Naive thymus-derived CD8-positive, alpha-beta T cell (primary cell): ENCODE measurements at regions of chr12 and their contacts with region 1.

Region 1: GRCh38 chr12:14960548-14961465 is 594 bp downstream of the ARHGDIB start:
- DNase-seq: peak; percentile 30 to 84 (median 62)
- ATAC-seq: peak; percentile 52 to 53
- H3K4me3 Mint-ChIP-seq: peak overlapping the region; percentile 95 to 100 (median 99)
- H3K27ac Mint-ChIP-seq: peak overlapping the region; percentile 95 to 100 (median 99)
- H3K4me1 Mint-ChIP-seq: peaks cover 39 to 89% (median 70%) of the 10 kb centered on the region in 4 donors
- H3K27me3 Mint-ChIP-seq: no peaks in the 10 kb centered on the region

Region 2: GRCh38 chr12:14803011-14803829 is 157.6 kb before region 1 on chr12 and contains the starts of genes C12orf60 and WBP11:
- POLR2A ChIA-PET with region 1: interaction called, 10 read pairs
- DNase-seq: peak; percentile 63 to 96 (median 88)
- ATAC-seq: peak; percentile 94 to 97
- H3K4me3 Mint-ChIP-seq: no peak within 1 kb of the TSS
- H3K27ac Mint-ChIP-seq: no peak within 1 kb of the TSS
- H3K4me1 Mint-ChIP-seq: peaks cover 10 to 24% (median 13%) of the 10 kb centered on the region in 4 donors
- H3K27me3 Mint-ChIP-seq: no peaks in the 10 kb centered on the region
- polyA plus RNA-seq, gene C12orf60: 0.98 to 2.5 (median 1.7) TPM
- polyA plus RNA-seq, gene WBP11: 59.5 to 66.5 (median 59.8) TPM

Region 3: DNA sequence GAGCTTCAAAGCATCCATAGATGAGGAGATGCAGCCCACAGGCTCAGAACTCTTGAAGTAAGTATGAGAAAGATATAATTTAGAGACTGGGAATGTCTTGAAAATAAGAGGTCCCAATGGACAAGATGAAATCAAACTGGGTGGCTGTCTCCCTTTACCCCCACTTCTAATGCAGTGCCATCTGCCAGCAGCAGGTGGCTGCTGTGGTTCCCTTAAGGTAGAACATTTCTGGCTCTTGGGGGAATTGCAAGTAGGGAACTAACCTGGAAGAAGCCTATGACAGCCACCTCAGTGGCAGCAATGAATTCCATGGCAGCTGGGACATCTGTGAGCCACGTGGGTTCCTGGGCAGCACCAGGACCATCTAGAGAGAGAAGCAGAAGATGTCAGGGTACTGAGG is 23.1 kb before region 1 on chr12:
- POLR2A ChIA-PET with region 1: interaction called, 30 read pairs
- DNase-seq: peak in 1 of 10 donors; percentile 15
- ATAC-seq: peak; percentile 39 to 42
- H3K4me3 Mint-ChIP-seq: peak overlapping the region in 5 of 10 donors; percentile 14 to 65 (median 47)
- H3K27ac Mint-ChIP-seq: peak overlapping the region; percentile 89 to 96 (median 92)
- H3K4me1 Mint-ChIP-seq: peaks cover 28 to 81% (median 68%) of the 10 kb centered on the region in 4 donors
- H3K27me3 Mint-ChIP-seq: no peaks in the 10 kb centered on the region

Region 4: GRCh38 chr12:14948672-14949071 is 12.1 kb before region 1 on chr12:
- POLR2A ChIA-PET with region 1: interaction called, 80 read pairs
- DNase-seq: peak in 9 of 10 donors; percentile 44 to 85 (median 71)
- ATAC-seq: peak; percentile 74 to 83
- H3K4me3 Mint-ChIP-seq: peak overlapping the region; percentile 74 to 100 (median 91)
- H3K27ac Mint-ChIP-seq: peak overlapping the region; percentile 95 to 100 (median 98)
- H3K4me1 Mint-ChIP-seq: peaks cover 47 to 94% (median 90%) of the 10 kb centered on the region in 4 donors
- H3K27me3 Mint-ChIP-seq: no peaks in the 10 kb centered on the region

Region 5: DNA sequence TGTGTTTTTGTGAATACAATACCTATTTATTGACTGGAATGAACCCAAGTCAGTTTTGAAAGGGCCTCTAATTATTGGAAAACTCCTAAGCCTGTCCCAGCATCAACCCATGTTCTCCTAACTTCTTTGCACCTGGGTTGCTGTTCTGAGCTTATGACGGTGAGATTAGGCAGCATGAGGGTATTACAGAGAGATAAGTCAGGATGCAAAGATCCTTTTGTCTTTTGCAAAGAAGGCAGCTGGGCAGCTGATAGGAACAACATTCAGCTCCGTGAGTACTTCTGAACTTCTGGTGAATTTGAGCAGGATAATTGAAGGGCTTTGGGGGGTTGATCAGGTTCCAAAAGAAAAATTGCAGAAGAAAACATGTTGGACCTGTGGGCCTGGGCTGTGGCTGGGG is 12.0 kb after region 1 on chr12 and contains the start of gene PDE6H:
- POLR2A ChIA-PET with region 1: interaction called, 18 read pairs
- DNase-seq: no peak
- ATAC-seq: no peak
- H3K4me3 Mint-ChIP-seq: no peak within 1 kb of the TSS
- H3K27ac Mint-ChIP-seq: peak within 1 kb of the TSS in 9 of 10 donors; percentile 8 to 69 (median 32)
- H3K4me1 Mint-ChIP-seq: peaks cover 29 to 59% (median 38%) of the 10 kb centered on the region in 4 donors
- H3K27me3 Mint-ChIP-seq: no peaks in the 10 kb centered on the region
- polyA plus RNA-seq, gene PDE6H: not detected

Region 6: DNA sequence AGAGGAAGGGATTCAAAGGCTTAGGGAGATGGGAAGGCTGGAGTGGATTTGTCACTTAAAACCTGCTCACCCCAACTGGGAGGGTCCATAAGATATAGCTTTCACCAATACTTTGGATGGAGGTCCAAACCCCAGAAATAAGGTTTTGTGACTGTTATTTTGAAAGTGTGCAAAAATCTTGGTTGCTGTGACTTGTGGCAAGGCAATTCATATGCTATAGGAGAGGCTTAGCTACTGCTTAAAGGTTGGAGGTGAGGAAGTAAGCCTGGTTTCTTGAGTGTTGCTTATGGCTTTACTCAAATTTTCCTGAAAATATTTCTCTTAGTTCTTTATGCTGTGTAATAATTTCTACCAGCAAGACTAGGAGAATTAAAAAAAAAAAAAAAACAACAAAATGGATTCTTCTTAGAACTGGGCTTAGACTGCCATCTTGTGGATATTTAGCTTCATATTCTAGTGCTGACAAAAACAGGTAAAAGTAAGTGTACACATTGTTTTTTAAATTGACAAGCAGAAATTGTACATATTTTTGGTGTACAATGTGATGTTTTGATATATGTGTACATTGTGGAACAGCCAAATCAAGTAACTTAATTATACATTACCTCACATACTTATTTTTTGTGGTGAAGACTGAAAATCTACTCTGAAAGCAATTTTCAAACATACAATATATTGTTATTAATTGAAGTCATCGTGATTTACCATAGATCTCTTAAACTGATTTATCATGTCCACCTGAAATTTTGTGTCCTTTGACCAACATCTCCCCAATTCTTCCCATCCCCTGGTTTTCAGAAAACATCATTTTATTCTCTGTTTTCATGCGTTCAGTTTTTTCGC is 35.0 kb after region 1 on chr12:
- POLR2A ChIA-PET with region 1: interaction called, 81 read pairs
- DNase-seq: peak in 3 of 10 donors; percentile 63 to 74 (median 68)
- ATAC-seq: peak; percentile 50 to 56
- H3K4me3 Mint-ChIP-seq: peak overlapping the region in 9 of 10 donors; percentile 1 to 76 (median 54)
- H3K27ac Mint-ChIP-seq: peak overlapping the region; percentile 63 to 94 (median 88)
- H3K4me1 Mint-ChIP-seq: peaks cover 19 to 44% (median 31%) of the 10 kb centered on the region in 4 donors
- H3K27me3 Mint-ChIP-seq: peaks cover 0 to 3% (median 0%) of the 10 kb centered on the region in 5 donors

Region 7: DNA sequence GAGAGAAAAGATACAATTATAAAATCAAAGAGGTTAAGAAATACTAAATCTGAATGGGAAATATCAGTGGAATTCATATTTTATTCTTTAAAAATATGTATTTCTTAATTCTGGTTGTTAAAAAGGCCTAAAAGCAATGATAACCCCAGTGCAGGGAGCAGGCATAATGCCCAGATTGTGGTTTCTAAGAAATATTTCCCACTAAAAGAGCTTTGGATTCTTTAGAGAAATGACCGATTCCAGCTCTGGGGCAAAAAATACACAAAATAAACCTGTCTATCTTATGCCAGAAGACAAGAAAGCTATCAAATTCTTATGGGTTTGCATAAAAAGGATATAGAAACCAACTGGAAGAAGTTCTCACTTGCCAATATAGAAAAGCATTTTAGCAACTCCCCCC is 83.7 kb after region 1 on chr12:
- POLR2A ChIA-PET with region 1: no interaction called
- DNase-seq: no peak
- ATAC-seq: no peak
- H3K4me3 Mint-ChIP-seq: no peak overlapping the region
- H3K27ac Mint-ChIP-seq: no peak overlapping the region
- H3K4me1 Mint-ChIP-seq: peaks cover 0 to 8% (median 0%) of the 10 kb centered on the region in 4 donors
- H3K27me3 Mint-ChIP-seq: peaks cover 4 to 14% (median 6%) of the 10 kb centered on the region in 5 donors